Mammary epithelial cell (primary cell): ENCODE measurements at regions of chr9 and their contacts with region 1.

Region 1: GRCh38 chr9:109063760-109064159 is 50.5 kb upstream of the CTNNAL1 start:
- DNase-seq: peak; percentile 14
- H3K4me3 ChIP-seq: no peak overlapping the region
- H3K27ac ChIP-seq: no peak overlapping the region
- H3K4me1 ChIP-seq: peaks cover 44% of the 10 kb centered on the region
- H3K27me3 ChIP-seq: no peaks in the 10 kb centered on the region
- CTCF ChIP-seq: peak; percentile 8 to 19

Region 2: GRCh38 chr9:108182950-108183381 is 880.8 kb before region 1 on chr9:
- CTCF ChIA-PET with region 1: interaction called, 12 read pairs
- dilution Hi-C with region 1: no loop called
- in situ Hi-C with region 1: no loop called
- intact Hi-C with region 1: no loop called
- DNase-seq: peak; percentile 56
- H3K4me3 ChIP-seq: no peak overlapping the region
- H3K27ac ChIP-seq: no peak overlapping the region
- H3K4me1 ChIP-seq: peaks cover 27% of the 10 kb centered on the region
- H3K27me3 ChIP-seq: no peaks in the 10 kb centered on the region
- CTCF ChIP-seq: no peak

Region 3: DNA sequence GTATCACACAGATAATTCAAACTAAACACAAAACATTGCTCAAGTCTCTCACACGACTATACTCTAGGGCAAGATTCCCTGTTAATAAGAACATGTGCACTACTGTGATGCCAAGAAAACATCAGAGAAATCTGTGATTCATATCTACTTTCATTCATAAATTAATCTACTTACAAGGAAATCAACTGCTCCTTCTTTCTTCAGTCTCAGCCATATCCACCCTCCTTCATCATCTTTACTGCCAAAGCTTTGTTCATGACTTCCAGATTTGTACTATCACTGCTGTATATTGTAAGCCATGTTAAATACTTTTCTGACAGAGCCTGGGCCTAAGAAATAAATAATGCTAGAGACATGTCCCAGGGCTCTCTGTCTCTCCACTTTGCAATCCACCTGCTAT is 85.6 kb before region 1 on chr9:
- CTCF ChIA-PET with region 1: no interaction called
- dilution Hi-C with region 1: no loop called
- in situ Hi-C with region 1: no loop called
- intact Hi-C with region 1: no loop called
- DNase-seq: no peak
- H3K4me3 ChIP-seq: no peak overlapping the region
- H3K27ac ChIP-seq: no peak overlapping the region
- H3K4me1 ChIP-seq: no peaks in the 10 kb centered on the region
- H3K27me3 ChIP-seq: no peaks in the 10 kb centered on the region
- CTCF ChIP-seq: no peak

Region 4: GRCh38 chr9:109110326-109111021 is 46.7 kb after region 1 on chr9:
- CTCF ChIA-PET with region 1: no interaction called
- dilution Hi-C with region 1: no loop called
- in situ Hi-C with region 1: no loop called
- intact Hi-C with region 1: loop called (anchors 1 kb)
- DNase-seq: peak; percentile 77
- H3K4me3 ChIP-seq: peak overlapping the region in 2 of 3 experiments; percentile 17 to 28
- H3K27ac ChIP-seq: peak overlapping the region; percentile 93
- H3K4me1 ChIP-seq: peaks cover 43% of the 10 kb centered on the region
- H3K27me3 ChIP-seq: no peaks in the 10 kb centered on the region
- CTCF ChIP-seq: no peak